ENCODE measurements at regions of chr7 and their contacts with region 1.

Region 1: GRCh38 chr7:25259587-25260243 is 31.4 kb upstream of the NPVF start:
- DNase-seq: peak; percentile 16 to 63
- ATAC-seq: peak; percentile 60 to 85 (median 70)
- H3K4me3 ChIP-seq: no peak overlapping the region
- H3K27ac ChIP-seq: no peak overlapping the region
- H3K4me1 ChIP-seq: peaks cover 0 to 27% (median 0%) of the 10 kb centered on the region in 9 donors
- H3K27me3 ChIP-seq: peaks cover 0 to 4% (median 0%) of the 10 kb centered on the region in 7 donors
- CTCF ChIP-seq: peak; percentile 65 to 89 (median 83)

Region 2: DNA sequence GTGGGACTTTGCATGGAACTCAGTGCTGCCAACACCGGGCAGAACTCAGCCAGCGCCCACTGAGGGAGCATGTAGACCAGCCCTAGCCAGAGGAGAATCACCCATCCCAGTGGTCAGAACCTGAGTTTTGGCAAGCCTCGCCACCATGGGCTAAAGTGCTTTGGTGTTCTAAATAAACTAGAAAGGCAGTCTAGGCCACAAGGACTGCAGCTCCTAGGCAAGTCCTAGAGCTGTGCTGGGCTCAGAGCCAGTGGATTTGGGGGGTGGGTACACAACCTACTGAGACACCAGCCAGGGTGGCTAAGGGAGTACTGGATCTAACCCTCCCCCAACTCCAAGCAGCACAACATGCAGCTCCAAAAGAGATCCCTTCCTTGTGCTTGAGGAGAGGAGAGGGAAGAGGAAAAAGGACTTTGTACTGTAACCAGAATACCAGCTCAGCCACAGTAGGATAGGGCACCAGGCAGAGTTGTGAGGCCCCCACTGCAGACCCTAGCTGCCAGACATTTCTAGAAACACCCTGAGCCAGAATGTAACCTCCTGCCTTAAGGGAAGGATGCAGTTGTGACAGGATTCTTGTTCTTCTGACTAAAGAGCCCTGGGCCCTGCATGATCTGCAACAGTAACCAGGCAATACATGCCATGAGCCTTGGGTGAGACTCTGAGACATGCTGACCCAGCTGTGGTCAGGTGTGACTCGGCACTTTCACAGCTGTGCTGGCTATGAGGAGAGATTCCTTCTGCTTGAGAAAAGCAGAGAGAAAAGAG is 526.9 kb before region 1 on chr7:
- intact Hi-C with region 1: no loop called
- DNase-seq: no peak
- ATAC-seq: peak in 1 of 8 donors; percentile 28
- H3K4me3 ChIP-seq: no peak overlapping the region
- H3K27ac ChIP-seq: no peak overlapping the region
- H3K4me1 ChIP-seq: peaks cover 0 to 35% (median 8%) of the 10 kb centered on the region in 9 donors
- H3K27me3 ChIP-seq: no peaks in the 10 kb centered on the region
- CTCF ChIP-seq: no peak

Region 3: GRCh38 chr7:25240340-25240739 is 19.4 kb before region 1 on chr7:
- intact Hi-C with region 1: no loop called
- DNase-seq: no peak
- ATAC-seq: peak in 4 of 8 donors; percentile 47 to 75 (median 60)
- H3K4me3 ChIP-seq: no peak overlapping the region
- H3K27ac ChIP-seq: no peak overlapping the region
- H3K4me1 ChIP-seq: peaks cover 0 to 16% (median 7%) of the 10 kb centered on the region in 9 donors
- H3K27me3 ChIP-seq: peaks cover 0 to 15% (median 0%) of the 10 kb centered on the region in 7 donors
- CTCF ChIP-seq: no peak

Region 4: DNA sequence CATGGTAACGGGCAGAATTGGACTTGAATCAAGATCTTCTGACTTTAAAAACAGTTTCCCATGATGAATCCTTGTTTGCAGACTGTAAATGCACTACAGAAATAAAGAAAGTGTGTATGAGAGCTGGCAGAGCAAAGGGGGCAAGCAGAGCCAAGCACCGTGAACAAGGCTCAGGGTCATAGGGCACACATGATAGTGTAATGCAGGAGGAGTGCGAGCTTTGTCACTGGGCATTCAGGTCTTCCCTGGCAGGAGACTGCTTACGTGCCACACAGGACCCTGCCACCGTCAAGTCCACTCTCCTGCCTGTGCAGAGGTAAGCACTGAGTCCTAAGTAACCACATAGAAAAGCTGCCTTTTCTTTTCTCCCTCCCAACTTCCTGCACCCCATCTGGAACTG is 61.7 kb after region 1 on chr7:
- intact Hi-C with region 1: no loop called
- DNase-seq: no peak
- ATAC-seq: no peak
- H3K4me3 ChIP-seq: no peak overlapping the region
- H3K27ac ChIP-seq: no peak overlapping the region
- H3K4me1 ChIP-seq: no peaks in the 10 kb centered on the region
- H3K27me3 ChIP-seq: peaks cover 0 to 15% (median 7%) of the 10 kb centered on the region in 7 donors
- CTCF ChIP-seq: no peak

Region 5: GRCh38 chr7:25559581-25560367 is 300.1 kb after region 1 on chr7:
- intact Hi-C with region 1: loop called in 7 of 10 experiments (anchors 2 to 5 kb)
- DNase-seq: no peak
- ATAC-seq: no peak
- H3K4me3 ChIP-seq: no peak overlapping the region
- H3K27ac ChIP-seq: no peak overlapping the region
- H3K4me1 ChIP-seq: peaks cover 0 to 8% (median 0%) of the 10 kb centered on the region in 9 donors
- H3K27me3 ChIP-seq: peaks cover 0 to 16% (median 4%) of the 10 kb centered on the region in 7 donors
- CTCF ChIP-seq: no peak

Region 6: DNA sequence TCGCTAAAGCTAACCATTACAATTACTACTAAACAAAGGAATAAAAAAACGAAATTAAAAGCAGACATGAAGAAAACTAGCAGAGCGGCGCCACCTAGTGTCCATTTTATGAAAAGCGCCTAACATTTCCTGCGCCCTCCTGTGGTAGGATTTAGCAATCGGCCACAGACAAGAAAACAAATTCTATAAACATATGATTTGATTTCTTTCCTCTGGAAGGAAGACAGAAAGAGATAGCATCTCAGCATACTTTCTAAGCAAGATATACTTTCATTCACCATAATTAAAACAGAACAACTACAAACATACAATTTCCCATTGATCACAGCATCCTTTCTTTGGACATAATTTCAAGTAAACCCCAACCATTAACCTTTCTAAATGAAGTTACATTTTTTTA is 306.2 kb after region 1 on chr7:
- intact Hi-C with region 1: loop called (anchors 1 to 5 kb)
- DNase-seq: peak; percentile 33 to 36
- ATAC-seq: peak in 2 of 8 donors; percentile 27 to 43
- H3K4me3 ChIP-seq: no peak overlapping the region
- H3K27ac ChIP-seq: peak overlapping the region in 1 of 10 donors; percentile 3
- H3K4me1 ChIP-seq: peaks cover 0 to 9% (median 7%) of the 10 kb centered on the region in 9 donors
- H3K27me3 ChIP-seq: peaks cover 0 to 8% (median 0%) of the 10 kb centered on the region in 7 donors
- CTCF ChIP-seq: peak; percentile 98 to 100 (median 100)